ENCODE measurements at regions of chr11 and their contacts with region 1.

Region 1: DNA sequence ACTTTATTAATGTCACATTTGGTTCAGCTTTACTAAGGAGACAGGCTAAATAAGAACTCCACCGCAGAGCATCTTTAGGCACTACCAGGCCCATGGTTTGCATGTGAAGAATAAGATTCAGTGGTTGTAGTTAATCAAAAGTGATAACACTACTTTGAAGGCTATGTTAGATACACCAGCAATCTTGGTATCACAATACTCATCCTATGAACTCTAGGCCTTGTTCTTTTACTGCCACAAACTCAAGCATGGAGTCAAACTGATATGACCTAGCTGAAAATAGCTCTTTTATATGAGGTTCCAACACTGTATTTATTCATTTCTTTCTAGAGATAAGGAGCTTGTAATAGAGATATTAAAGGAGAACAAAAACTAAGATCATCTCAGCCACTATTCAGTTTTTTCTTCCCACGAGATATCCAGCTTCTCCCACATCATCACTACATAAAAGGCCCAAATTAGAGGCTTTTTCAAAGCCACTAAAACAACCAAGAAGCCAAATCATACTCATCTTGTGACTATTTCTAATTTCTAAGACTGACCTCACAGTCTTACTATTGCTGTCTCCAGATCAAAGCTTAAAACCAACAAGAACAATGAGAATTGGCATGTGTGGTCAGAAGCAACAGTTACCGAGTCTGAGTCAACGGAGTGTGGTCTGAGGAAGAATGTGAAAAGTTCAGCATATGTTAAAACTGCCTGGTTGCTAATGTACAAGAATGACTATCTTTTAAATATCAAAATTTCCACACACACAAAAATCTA is 25.1 kb upstream of the GUCY1A2 start:
- DNase-seq: no peak
- ATAC-seq: no peak
- H3K4me3 ChIP-seq: no peak overlapping the region
- H3K27ac ChIP-seq: no peak overlapping the region
- H3K4me1 ChIP-seq: no peaks in the 10 kb centered on the region
- H3K27me3 ChIP-seq: no peaks in the 10 kb centered on the region
- CTCF ChIP-seq: no peak

Region 2: DNA sequence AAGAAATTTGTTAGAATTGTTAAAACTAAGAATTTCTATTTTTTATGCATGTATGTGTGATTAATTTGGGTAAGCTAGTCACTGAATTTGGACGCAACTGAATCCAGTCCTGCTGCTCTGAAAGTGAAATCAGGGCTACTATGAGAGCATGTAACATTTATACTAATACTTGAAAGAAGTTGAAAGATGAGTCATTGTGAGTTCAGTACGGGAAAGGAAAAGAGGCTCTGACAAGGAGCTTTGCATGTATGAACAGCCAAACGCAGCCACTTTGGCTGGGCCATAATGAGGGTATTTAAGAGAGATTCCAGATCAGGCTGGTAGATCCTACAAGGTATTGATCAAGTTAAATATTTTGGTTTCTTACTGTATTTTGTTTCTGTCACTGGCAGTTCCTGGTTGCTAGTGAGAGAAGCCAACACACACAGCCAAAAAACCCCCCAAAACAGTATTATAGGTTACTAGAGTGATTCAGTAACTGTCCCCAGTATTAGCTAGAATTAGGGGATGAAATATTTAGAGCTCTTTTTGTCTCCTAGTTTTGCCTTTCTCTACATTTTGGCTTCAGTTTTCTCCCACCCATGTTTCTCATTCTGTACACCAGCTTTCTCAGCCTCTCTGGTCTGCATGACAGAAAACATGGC is 951.8 kb before region 1 on chr11:
- intact Hi-C with region 1: loop called in 1 of 10 experiments (anchors 10 kb)
- DNase-seq: no peak
- ATAC-seq: peak in 1 of 8 donors; percentile 24
- H3K4me3 ChIP-seq: no peak overlapping the region
- H3K27ac ChIP-seq: no peak overlapping the region
- H3K4me1 ChIP-seq: peaks cover 0 to 47% (median 30%) of the 10 kb centered on the region in 9 donors
- H3K27me3 ChIP-seq: no peaks in the 10 kb centered on the region
- CTCF ChIP-seq: no peak

Region 3: DNA sequence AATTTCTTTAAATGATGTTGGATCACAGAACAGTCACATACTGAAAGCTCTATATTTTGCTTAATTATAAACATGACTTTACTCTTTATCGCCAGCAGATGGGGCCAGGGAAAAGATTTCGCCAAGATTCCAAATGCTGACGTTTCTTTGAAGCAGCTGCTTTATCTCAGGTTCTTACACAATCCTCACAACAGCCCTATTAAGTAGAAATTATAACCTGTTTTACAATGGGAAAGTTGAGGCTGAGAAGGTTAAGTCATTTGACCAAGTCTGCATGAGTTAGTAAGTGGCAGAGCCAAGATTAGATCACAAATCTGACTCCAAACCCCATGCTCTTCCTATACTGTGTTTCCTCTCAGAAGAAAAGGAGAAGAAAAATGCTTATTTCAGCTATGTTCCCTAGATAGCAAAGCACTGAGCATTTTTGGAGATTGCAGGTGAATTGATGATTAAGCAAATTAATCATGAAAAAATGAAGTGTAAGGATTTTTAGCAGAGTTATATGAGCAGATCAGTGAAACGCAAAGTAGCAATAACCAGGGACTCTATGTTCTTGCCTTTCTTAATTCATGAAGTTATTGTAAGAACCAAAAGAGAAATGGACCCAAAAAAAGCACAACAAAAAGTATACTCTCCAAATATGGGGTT is 887.0 kb before region 1 on chr11:
- intact Hi-C with region 1: loop called in 1 of 10 experiments (anchors 10 kb)
- DNase-seq: no peak
- ATAC-seq: peak in 1 of 8 donors; percentile 38
- H3K4me3 ChIP-seq: no peak overlapping the region
- H3K27ac ChIP-seq: no peak overlapping the region
- H3K4me1 ChIP-seq: no peaks in the 10 kb centered on the region
- H3K27me3 ChIP-seq: peaks cover 0 to 4% (median 0%) of the 10 kb centered on the region in 7 donors
- CTCF ChIP-seq: peak in 7 of 9 donors; percentile 18 to 49 (median 31)

Region 4: DNA sequence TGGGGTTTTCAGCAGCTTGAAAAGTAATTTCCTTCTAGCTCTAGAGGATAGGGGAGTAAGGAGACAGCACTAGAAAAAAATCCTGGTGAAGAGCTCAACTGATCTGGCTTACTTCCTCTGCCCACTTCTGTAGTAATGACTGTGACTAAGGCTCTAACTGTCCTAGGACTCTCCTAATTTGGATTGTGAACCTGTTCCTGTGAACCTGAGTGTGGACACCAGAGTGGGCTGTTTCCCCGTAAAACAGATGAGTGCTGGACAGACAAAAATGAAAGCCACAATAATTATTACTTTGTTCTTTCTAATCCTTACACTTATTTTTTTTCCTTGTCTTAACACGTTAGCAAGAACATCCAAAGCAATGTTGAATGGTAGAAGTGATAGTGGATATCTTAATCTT is 811.8 kb before region 1 on chr11:
- intact Hi-C with region 1: loop called in 1 of 10 experiments (anchors 5 kb)
- DNase-seq: no peak
- ATAC-seq: peak in 2 of 8 donors; percentile 48 to 55
- H3K4me3 ChIP-seq: no peak overlapping the region
- H3K27ac ChIP-seq: no peak overlapping the region
- H3K4me1 ChIP-seq: no peaks in the 10 kb centered on the region
- H3K27me3 ChIP-seq: no peaks in the 10 kb centered on the region
- CTCF ChIP-seq: peak in 3 of 9 donors; percentile 15 to 24 (median 19)

Region 5: DNA sequence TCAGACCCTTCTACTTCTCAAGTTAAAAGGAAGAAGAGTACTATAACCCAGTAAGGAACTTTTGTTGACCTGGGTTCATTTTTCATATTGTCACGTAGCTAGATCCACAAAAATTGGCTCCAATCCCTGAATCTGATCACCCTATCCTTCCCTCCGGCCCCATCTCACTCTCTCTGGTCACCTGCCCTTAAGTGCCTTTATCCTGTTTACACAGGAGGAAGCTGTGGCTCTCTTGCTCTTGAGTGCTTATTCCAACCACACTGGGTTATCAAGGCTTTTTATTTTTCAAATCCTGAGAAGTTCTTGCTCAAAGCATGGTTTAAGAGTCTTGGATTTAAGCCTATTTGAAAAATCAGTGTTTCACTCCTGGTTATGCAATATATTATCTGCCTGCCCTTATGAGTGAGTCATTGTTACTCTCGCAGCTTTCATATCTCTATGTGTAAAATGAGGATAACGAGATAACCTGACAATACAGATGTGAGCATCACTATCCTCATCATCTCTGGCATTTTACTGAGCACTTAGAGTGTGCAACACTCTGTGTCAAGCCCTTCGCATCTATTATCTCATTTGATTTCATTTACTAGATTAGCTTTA is 319.0 kb before region 1 on chr11:
- intact Hi-C with region 1: loop called in 6 of 10 experiments (anchors 5 to 10 kb)
- DNase-seq: no peak
- ATAC-seq: peak in 1 of 8 donors; percentile 35
- H3K4me3 ChIP-seq: no peak overlapping the region
- H3K27ac ChIP-seq: no peak overlapping the region
- H3K4me1 ChIP-seq: no peaks in the 10 kb centered on the region
- H3K27me3 ChIP-seq: no peaks in the 10 kb centered on the region
- CTCF ChIP-seq: no peak

Measured in heart right ventricle (tissue), 16 donors.